Gastrocnemius medialis (tissue), 4 donors: ENCODE measurements at regions of chr5 and their contacts with region 1.

Region 1: GRCh38 chr5:95846554-95847260 is 24.2 kb upstream of the GLRX start:
- DNase-seq: peak in 1 of 2 donors; percentile 68
- ATAC-seq: peak; percentile 43 to 56
- H3K4me3 ChIP-seq: peak overlapping the region in 3 of 4 donors; percentile 8 to 59 (median 52)
- H3K27ac ChIP-seq: peak overlapping the region; percentile 84 to 92 (median 88)
- H3K4me1 ChIP-seq: peaks cover 19 to 30% of the 10 kb centered on the region in 2 donors
- H3K27me3 ChIP-seq: no peaks in the 10 kb centered on the region
- CTCF ChIP-seq: peak; percentile 92 to 97 (median 94)
- POLR2A ChIP-seq: no peak

Region 2: DNA sequence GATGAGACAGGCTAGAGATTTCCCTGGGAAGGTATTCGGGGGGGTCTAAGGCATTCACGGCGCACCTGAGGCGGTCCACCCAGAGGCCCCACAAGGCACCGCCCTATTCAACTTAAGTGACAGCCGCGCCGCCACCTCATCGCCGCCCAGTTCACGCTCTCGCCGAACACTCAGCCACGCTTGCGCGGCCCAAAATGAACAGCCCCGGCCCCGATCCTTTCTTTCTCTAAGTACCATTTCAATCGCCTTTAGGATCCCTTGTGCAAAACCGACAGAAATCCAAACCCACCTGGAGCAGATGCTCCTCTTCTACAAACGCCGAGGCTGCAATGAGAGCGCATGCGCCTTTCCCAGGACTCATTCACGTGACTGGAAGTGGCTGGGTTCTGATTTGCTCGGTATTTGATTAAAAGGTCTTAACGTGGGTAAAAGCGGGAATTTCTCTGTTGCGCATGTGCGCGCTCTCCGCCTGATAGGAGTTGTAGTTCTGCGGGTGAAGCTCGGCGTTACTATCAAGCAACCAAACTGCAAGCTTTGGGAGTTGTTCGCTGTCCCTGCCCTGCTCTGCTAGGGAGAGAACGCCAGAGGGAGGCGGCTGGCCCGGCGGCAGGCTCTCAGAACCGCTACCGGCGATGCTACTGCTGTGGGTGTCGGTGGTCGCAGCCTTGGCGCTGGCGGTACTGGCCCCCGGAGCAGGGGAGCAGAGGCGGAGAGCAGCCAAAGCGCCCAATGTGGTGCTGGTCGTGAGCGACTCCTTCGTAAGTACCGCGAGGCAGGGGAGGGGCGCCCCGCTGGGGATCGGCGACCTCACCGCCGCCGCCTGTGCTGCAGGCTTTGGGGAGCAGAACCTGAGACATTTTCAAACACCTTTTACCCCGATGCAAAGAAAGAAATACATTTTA is 291.8 kb before region 1 on chr5 and contains the starts of genes ARSK and SKIC3:
- in situ Hi-C with region 1: no loop called
- intact Hi-C with region 1: loop called (anchors 10 kb)
- DNase-seq: peak; percentile 91 to 96
- ATAC-seq: peak; percentile 98
- H3K4me3 ChIP-seq: peak within 1 kb of the TSS; percentile 69 to 96 (median 86)
- H3K27ac ChIP-seq: peak within 1 kb of the TSS; percentile 83 to 93 (median 88)
- H3K4me1 ChIP-seq: peaks cover 20 to 27% of the 10 kb centered on the region in 2 donors
- H3K27me3 ChIP-seq: no peaks in the 10 kb centered on the region
- CTCF ChIP-seq: peak in 4 of 5 experiments; percentile 32 to 49 (median 33)
- POLR2A ChIP-seq: peak; percentile 64 to 83
- total RNA-seq, gene ARSK: 2.3 to 4.3 (median 2.8) TPM
- total RNA-seq, gene SKIC3: 40.6 to 54.4 (median 43.4) TPM

Region 3: GRCh38 chr5:95664204-95664786 is 182.4 kb before region 1 on chr5:
- in situ Hi-C with region 1: loop called (anchors 5 kb)
- intact Hi-C with region 1: loop called (anchors 2 kb)
- DNase-seq: no peak
- ATAC-seq: peak in 1 of 2 donors; percentile 64
- H3K4me3 ChIP-seq: no peak overlapping the region
- H3K27ac ChIP-seq: peak overlapping the region in 3 of 4 donors; percentile 6 to 54 (median 44)
- H3K4me1 ChIP-seq: peaks cover 9 to 12% of the 10 kb centered on the region in 2 donors
- H3K27me3 ChIP-seq: no peaks in the 10 kb centered on the region
- CTCF ChIP-seq: peak; percentile 60 to 94 (median 79)
- POLR2A ChIP-seq: no peak

Region 4: GRCh38 chr5:95730730-95731570 is 115.8 kb before region 1 on chr5 and contains the start of gene RHOBTB3:
- in situ Hi-C with region 1: no loop called
- intact Hi-C with region 1: loop called (anchors 2 kb)
- DNase-seq: peak; percentile 89 to 91
- ATAC-seq: peak; percentile 69 to 72
- H3K4me3 ChIP-seq: peak within 1 kb of the TSS; percentile 80 to 87 (median 85)
- H3K27ac ChIP-seq: peak within 1 kb of the TSS; percentile 91 to 96 (median 94)
- H3K4me1 ChIP-seq: peaks cover 39 to 48% of the 10 kb centered on the region in 2 donors
- H3K27me3 ChIP-seq: no peaks in the 10 kb centered on the region
- CTCF ChIP-seq: peak in 1 of 5 experiments; percentile 16
- POLR2A ChIP-seq: peak; percentile 88 to 92
- total RNA-seq, gene RHOBTB3: 40.1 to 134 (median 86.9) TPM

Region 5: GRCh38 chr5:95781101-95781583 is 65.6 kb before region 1 on chr5:
- in situ Hi-C with region 1: loop called (anchors 5 to 10 kb)
- intact Hi-C with region 1: loop called (anchors 1 kb)
- DNase-seq: peak; percentile 77 to 88
- ATAC-seq: peak; percentile 75 to 87
- H3K4me3 ChIP-seq: no peak overlapping the region
- H3K27ac ChIP-seq: peak overlapping the region; percentile 76 to 85 (median 83)
- H3K4me1 ChIP-seq: peaks cover 18 to 72% of the 10 kb centered on the region in 2 donors
- H3K27me3 ChIP-seq: no peaks in the 10 kb centered on the region
- CTCF ChIP-seq: peak; percentile 87 to 95 (median 89)
- POLR2A ChIP-seq: no peak

Region 6: GRCh38 chr5:96702503-96703383 is 856.0 kb after region 1 on chr5:
- in situ Hi-C with region 1: loop called in 2 of 4 experiments (anchors 25 kb)
- intact Hi-C with region 1: no loop called
- DNase-seq: peak; percentile 97 to 98
- ATAC-seq: peak; percentile 49 to 68
- H3K4me3 ChIP-seq: peak overlapping the region; percentile 63 to 87 (median 79)
- H3K27ac ChIP-seq: peak overlapping the region; percentile 94 to 99 (median 98)
- H3K4me1 ChIP-seq: peaks cover 38 to 75% of the 10 kb centered on the region in 2 donors
- H3K27me3 ChIP-seq: no peaks in the 10 kb centered on the region
- CTCF ChIP-seq: no peak
- POLR2A ChIP-seq: peak; percentile 90 to 93